WTC11 (cell line): ENCODE measurements at regions of chr11 and their contacts with region 1.

Region 1: GRCh38 chr11:61733120-61733978 is 19.1 kb upstream of the MYRF start:
- DNase-seq: peak; percentile 85
- ATAC-seq: peak; percentile 66
- H3K4me3 Mint-ChIP-seq: no peak overlapping the region
- H3K27ac Mint-ChIP-seq: peak overlapping the region; percentile 39; the same call in 1 of the 2 replicates
- H3K4me1 Mint-ChIP-seq: peaks cover 2% of the 10 kb centered on the region; the same call in 1 of the 2 replicates
- H3K27me3 Mint-ChIP-seq: no peaks in the 10 kb centered on the region
- CTCF ChIP-seq: peak; percentile 89

Region 2: DNA sequence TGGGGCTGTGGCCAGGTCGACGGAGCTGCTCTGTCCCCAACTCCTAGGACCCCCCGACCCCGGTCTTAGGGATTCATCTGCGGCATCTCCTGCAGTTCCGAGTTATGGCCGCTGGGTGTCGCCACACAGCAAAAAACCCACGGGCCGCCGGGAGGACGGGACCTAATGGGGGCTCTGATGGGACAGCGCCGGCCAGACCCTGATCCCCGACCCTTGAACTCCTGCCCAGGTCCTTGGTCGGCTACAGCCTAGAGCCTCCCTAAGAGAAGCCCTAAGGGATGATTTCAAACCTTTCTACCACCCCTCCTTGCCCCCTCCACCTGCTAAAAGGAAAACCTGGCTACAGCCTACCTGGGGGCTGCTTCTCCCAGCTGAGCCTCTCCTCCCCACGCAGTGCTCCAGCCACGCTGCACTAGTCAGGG is 255.6 kb before region 1 on chr11:
- CTCF ChIA-PET with region 1: interaction called, 11 read pairs
- POLR2A ChIA-PET with region 1: no interaction called
- DNase-seq: peak; percentile 86
- ATAC-seq: peak; percentile 43
- H3K4me3 Mint-ChIP-seq: no peak overlapping the region
- H3K27ac Mint-ChIP-seq: no peak overlapping the region
- H3K4me1 Mint-ChIP-seq: peaks cover 29% of the 10 kb centered on the region
- H3K27me3 Mint-ChIP-seq: peaks cover 3% of the 10 kb centered on the region; the same call in 1 of the 2 replicates
- CTCF ChIP-seq: peak; percentile 95

Region 3: DNA sequence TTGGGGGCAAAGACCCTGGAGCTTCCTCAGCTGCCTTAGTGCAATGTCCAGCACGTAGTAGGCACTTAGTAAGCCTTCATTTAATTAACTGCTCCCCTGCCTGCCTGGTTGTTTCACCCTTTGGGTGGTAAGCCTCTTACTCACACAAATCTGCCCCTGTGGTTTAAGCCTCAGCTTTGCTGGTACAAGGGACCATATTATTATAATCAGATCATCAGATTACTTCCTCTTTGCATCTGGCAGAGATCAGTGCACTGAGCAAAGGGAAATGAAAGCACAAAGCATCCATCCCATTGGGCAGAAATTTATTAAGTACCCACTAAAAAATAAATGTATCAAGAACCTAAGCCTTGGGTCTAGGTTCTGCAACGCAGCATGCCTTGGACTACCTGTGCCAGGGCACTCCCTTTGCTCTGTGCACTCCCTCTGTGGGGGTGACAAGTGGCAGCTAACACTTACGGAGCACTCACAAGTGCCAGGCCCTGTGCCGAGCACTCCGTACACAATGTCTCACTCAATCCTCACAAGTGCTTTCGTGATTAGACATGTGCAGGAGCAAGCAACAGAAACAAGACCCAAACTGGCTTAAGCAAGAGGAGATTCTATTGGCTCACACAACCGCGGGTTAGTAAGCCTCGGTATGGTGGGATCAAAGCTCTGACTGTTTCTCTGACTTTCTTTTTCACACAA is 88.0 kb before region 1 on chr11:
- CTCF ChIA-PET with region 1: interaction called, 42 read pairs
- POLR2A ChIA-PET with region 1: no interaction called
- DNase-seq: no peak
- ATAC-seq: no peak
- H3K4me3 Mint-ChIP-seq: no peak overlapping the region
- H3K27ac Mint-ChIP-seq: no peak overlapping the region
- H3K4me1 Mint-ChIP-seq: no peaks in the 10 kb centered on the region
- H3K27me3 Mint-ChIP-seq: no peaks in the 10 kb centered on the region
- CTCF ChIP-seq: no peak

Region 4: GRCh38 chr11:61679893-61680621 is 53.3 kb before region 1 on chr11 and contains the start of gene DAGLA:
- CTCF ChIA-PET with region 1: interaction called, 29 read pairs
- POLR2A ChIA-PET with region 1: interaction called, 3 read pairs
- DNase-seq: peak; percentile 72
- ATAC-seq: peak; percentile 69
- H3K4me3 Mint-ChIP-seq: peak within 1 kb of the TSS; percentile 65
- H3K27ac Mint-ChIP-seq: no peak within 1 kb of the TSS
- H3K4me1 Mint-ChIP-seq: peaks cover 15% of the 10 kb centered on the region
- H3K27me3 Mint-ChIP-seq: peaks cover 8% of the 10 kb centered on the region
- CTCF ChIP-seq: peak; percentile 96
- total RNA-seq, gene DAGLA: 3.1 to 3.4 TPM (median 3.4 TPM) in 3 replicates

Region 5: DNA sequence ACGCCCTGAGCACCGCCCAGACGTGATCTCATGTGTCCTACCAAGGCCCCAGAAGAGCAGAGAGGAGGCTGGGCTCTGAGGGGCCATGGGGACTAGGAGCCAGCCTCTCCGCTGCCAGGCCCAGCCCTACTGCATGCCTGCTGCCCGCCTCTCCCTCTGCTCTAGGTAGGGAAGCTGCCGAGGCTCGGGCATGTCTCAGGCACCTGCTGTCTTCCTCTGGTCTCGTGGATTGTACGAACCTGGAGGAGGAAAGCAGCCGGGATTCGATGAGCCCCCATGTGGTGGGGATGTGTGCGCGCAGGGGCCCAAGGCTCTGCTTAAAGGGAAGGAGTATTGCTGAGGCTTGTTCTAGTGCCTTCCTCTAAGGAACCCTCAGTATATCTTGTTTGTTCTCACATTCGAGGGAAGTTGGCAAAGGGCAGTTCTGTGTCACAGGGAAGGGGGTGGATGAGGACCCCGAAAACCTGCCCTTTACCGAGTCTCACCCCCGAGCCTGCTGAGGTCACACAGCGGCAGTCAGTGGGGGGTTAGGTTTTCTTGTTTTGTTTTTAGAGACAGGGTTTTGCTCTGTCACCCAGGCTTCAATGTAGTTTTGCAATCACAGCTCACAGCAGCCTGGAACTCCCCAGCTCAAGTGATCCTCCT is 32.0 kb before region 1 on chr11:
- CTCF ChIA-PET with region 1: interaction called, 15 read pairs
- POLR2A ChIA-PET with region 1: no interaction called
- DNase-seq: peak; percentile 81
- ATAC-seq: peak; percentile 91
- H3K4me3 Mint-ChIP-seq: no peak overlapping the region
- H3K27ac Mint-ChIP-seq: no peak overlapping the region
- H3K4me1 Mint-ChIP-seq: peaks cover 19% of the 10 kb centered on the region
- H3K27me3 Mint-ChIP-seq: no peaks in the 10 kb centered on the region; the same call in 1 of the 2 replicates
- CTCF ChIP-seq: 0 out of 2 replicates have a peak, but pooled peaks have one; percentile 20

Region 6: GRCh38 chr11:61747192-61747966 is 14.0 kb after region 1 on chr11:
- CTCF ChIA-PET with region 1: interaction called, 67 read pairs
- POLR2A ChIA-PET with region 1: no interaction called
- DNase-seq: peak; percentile 88
- ATAC-seq: peak; percentile 81
- H3K4me3 Mint-ChIP-seq: no peak overlapping the region
- H3K27ac Mint-ChIP-seq: no peak overlapping the region
- H3K4me1 Mint-ChIP-seq: peaks cover 10% of the 10 kb centered on the region
- H3K27me3 Mint-ChIP-seq: peaks cover 20% of the 10 kb centered on the region
- CTCF ChIP-seq: peak; percentile 85

Region 7: DNA sequence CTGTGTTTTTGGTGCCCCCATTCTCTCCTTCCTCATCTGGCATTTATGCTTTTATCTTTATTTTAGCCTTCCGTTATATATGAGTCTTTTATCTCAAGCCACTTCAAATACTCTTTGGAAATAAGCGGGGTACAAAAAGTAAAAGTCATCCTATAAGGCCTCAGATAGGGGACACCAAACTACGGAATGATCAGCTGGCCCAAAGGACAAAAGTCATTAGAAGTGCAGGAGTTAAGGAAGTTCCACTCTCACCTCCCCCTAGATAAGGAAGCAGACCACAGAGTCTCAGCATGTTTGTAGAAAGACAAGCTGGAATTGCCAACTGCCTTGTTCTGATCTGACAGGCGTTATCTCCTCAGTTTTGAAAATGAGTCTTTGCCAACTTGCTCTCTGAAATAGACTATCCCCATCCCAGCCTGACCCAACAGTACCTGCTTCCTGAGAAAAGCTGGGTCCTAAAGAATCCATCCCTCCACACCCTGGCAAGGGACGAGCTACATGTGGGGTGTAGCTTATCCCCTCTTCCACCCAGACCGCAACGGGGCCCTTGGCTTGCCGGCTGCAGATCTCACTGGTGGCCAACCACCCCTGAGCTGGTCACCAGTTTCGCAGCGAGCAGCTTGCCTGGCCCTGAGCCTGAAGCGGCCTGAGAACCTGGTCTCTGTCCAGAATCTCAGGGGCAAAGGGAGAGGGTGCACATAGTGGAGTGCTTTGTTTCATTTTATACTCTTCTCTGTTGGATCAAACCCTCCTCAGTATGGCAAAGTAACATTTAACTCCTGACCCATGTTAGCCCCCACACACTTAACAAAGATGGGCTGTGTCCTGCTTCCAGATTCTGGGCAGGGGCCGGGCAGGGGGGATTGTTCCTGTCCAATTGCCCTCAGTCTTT is 108.5 kb after region 1 on chr11:
- CTCF ChIA-PET with region 1: no interaction called
- POLR2A ChIA-PET with region 1: no interaction called
- DNase-seq: no peak
- ATAC-seq: no peak
- H3K4me3 Mint-ChIP-seq: no peak overlapping the region
- H3K27ac Mint-ChIP-seq: no peak overlapping the region; the same call in 1 of the 2 replicates
- H3K4me1 Mint-ChIP-seq: peaks cover 6% of the 10 kb centered on the region
- H3K27me3 Mint-ChIP-seq: no peaks in the 10 kb centered on the region
- CTCF ChIP-seq: no peak